ENCODE measurements at regions of chr12 and their contacts with region 1.

Region 1: DNA sequence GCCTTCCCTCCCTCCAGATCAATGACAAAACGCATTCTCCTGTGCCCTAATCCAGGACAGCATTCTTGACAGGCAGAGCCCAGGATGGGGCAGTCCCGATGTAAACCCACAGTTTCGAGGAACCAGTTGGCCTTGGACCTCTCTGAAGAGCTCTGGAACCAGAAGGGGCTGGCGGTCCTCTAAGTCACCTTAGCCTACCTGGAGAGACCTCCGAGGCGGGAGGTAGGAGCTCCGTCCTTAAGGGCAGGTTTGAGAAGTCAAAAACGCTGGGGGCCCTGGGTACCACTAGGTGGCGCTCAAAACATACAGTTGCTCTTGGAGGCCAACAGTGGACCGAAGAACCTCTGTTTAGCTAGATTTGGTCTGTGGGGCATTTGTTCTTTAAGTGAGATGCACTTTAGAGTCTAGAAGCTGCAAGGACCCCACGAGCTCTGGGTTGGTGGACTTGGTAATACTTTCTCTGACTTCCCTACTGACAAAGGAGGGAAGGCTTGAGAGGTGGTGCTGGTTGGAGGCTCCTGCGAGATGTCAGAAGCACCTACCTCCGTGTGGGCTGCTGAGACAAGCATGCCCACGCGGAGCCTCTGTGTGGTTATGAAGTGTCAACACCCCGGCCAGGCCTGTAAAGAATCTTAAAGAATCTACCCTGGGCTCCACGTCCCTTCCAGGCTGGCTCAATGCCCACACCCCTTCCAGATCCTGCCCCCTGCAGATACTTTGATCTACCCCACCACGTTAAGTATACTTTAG is 74.8 kb upstream of the CHST11 start:
- DNase-seq: peak; percentile 44
- ATAC-seq: peak; percentile 98
- H3K4me3 ChIP-seq: no peak overlapping the region
- H3K27ac ChIP-seq: no peak overlapping the region
- H3K4me1 ChIP-seq: no peaks in the 10 kb centered on the region
- H3K27me3 ChIP-seq: no peaks in the 10 kb centered on the region
- CTCF ChIP-seq: peak; percentile 91 to 92 (median 91); a peak in 5 of 6 replicates
- EP300 ChIP-seq: no peak
- POLR2A ChIP-seq: no peak
- RAD21 ChIP-seq: peak; percentile 100

Region 2: GRCh38 chr12:104201238-104202001 is 180.5 kb before region 1 on chr12:
- CTCF ChIA-PET with region 1: interaction called, 12 read pairs
- POLR2A ChIA-PET with region 1: no interaction called
- RAD21 ChIA-PET with region 1: no interaction called
- SMC1A ChIA-PET with region 1: interaction called, 4 read pairs
- in situ Hi-C with region 1: no loop called
- intact Hi-C with region 1: no loop called
- DNase-seq: peak; percentile 35
- ATAC-seq: peak; percentile 90
- H3K4me3 ChIP-seq: no peak overlapping the region
- H3K27ac ChIP-seq: no peak overlapping the region
- H3K4me1 ChIP-seq: no peaks in the 10 kb centered on the region
- H3K27me3 ChIP-seq: no peaks in the 10 kb centered on the region
- CTCF ChIP-seq: peak; percentile 80 to 83 (median 83)
- EP300 ChIP-seq: no peak
- POLR2A ChIP-seq: no peak
- RAD21 ChIP-seq: peak; percentile 95

Region 3: DNA sequence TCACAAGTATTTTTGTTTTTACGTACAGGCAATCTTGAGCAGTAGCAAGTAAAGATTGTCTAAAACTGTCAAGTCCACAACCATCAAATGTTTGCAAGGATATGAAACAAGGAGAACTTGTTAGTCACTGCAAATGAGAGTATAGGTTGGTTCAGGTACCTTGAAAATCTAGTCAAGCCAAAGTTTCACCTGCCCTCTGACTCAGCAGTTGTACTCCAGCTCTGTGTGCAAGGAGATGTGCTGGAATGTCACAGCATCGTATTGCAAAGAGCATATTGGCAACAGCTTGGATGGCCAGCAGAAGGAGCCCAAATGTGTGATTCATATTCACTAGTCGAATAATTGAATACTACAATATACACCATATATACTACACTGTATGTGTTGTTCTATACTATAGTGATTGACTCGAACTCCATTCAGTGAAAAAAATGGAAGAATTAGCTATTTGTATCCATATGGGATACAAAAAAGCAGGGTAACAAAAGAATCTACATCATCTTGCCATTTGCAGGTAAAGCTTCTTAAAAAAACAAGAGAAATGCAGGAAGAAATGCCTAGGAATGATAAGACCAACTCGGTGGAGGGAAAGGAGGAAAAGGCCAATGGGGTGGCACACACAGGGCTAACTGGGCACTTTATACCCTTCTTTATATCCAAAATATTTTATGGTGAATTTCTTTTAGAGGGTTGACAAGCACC is 34.4 kb before region 1 on chr12:
- CTCF ChIA-PET with region 1: no interaction called
- POLR2A ChIA-PET with region 1: no interaction called
- RAD21 ChIA-PET with region 1: no interaction called
- SMC1A ChIA-PET with region 1: no interaction called
- in situ Hi-C with region 1: no loop called
- intact Hi-C with region 1: no loop called
- DNase-seq: no peak
- ATAC-seq: no peak
- H3K4me3 ChIP-seq: no peak overlapping the region
- H3K27ac ChIP-seq: no peak overlapping the region
- H3K4me1 ChIP-seq: peaks cover 9% of the 10 kb centered on the region
- H3K27me3 ChIP-seq: no peaks in the 10 kb centered on the region
- CTCF ChIP-seq: no peak
- EP300 ChIP-seq: no peak
- POLR2A ChIP-seq: no peak
- RAD21 ChIP-seq: no peak

Region 4: GRCh38 chr12:104485651-104486362 is 103.9 kb after region 1 on chr12:
- CTCF ChIA-PET with region 1: interaction called, 14 read pairs
- POLR2A ChIA-PET with region 1: no interaction called
- RAD21 ChIA-PET with region 1: interaction called, 4 read pairs
- SMC1A ChIA-PET with region 1: interaction called, 4 read pairs
- in situ Hi-C with region 1: no loop called
- intact Hi-C with region 1: no loop called
- DNase-seq: no peak
- ATAC-seq: peak; percentile 65
- H3K4me3 ChIP-seq: no peak overlapping the region
- H3K27ac ChIP-seq: peak overlapping the region; percentile 52
- H3K4me1 ChIP-seq: peaks cover 35% of the 10 kb centered on the region
- H3K27me3 ChIP-seq: no peaks in the 10 kb centered on the region
- CTCF ChIP-seq: no peak
- EP300 ChIP-seq: no peak
- POLR2A ChIP-seq: no peak
- RAD21 ChIP-seq: no peak

Region 5: DNA sequence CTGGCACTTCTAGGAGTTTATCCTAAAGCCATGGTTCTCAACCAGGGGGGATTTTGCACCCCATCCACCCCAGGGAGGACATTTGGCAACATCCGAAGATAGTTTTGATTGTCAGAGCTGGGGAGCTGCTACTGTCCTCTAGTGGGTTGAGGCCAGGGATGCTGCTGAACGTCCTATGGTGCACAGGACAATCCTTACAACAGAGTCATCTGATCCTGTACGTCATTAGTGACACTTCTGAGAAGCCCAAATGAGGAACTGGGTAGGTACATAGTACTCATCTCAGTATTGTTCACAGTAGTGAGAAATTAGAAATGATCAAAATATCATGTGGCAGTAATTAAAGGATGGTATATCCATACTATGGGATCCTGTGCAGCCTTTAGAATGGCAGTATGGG is 260.0 kb after region 1 on chr12:
- CTCF ChIA-PET with region 1: interaction called, 11 read pairs
- POLR2A ChIA-PET with region 1: no interaction called
- RAD21 ChIA-PET with region 1: interaction called, 7 read pairs
- SMC1A ChIA-PET with region 1: interaction called, 8 read pairs
- in situ Hi-C with region 1: no loop called
- intact Hi-C with region 1: loop called (anchors 5 kb)
- DNase-seq: peak; percentile 79
- ATAC-seq: peak; percentile 92
- H3K4me3 ChIP-seq: no peak overlapping the region
- H3K27ac ChIP-seq: peak overlapping the region; percentile 78
- H3K4me1 ChIP-seq: peaks cover 43% of the 10 kb centered on the region
- H3K27me3 ChIP-seq: no peaks in the 10 kb centered on the region
- CTCF ChIP-seq: peak; percentile 37 to 65 (median 50); a peak in 5 of 6 replicates
- EP300 ChIP-seq: peak; percentile 99
- POLR2A ChIP-seq: no peak
- RAD21 ChIP-seq: peak; percentile 65

Region 6: GRCh38 chr12:104733717-104734175 is 351.8 kb after region 1 on chr12:
- CTCF ChIA-PET with region 1: interaction called, 10 read pairs
- POLR2A ChIA-PET with region 1: no interaction called
- RAD21 ChIA-PET with region 1: no interaction called
- SMC1A ChIA-PET with region 1: interaction called, 5 read pairs
- in situ Hi-C with region 1: no loop called
- intact Hi-C with region 1: no loop called
- DNase-seq: no peak
- ATAC-seq: peak; percentile 75
- H3K4me3 ChIP-seq: no peak overlapping the region
- H3K27ac ChIP-seq: no peak overlapping the region
- H3K4me1 ChIP-seq: peaks cover 18% of the 10 kb centered on the region
- H3K27me3 ChIP-seq: no peaks in the 10 kb centered on the region
- CTCF ChIP-seq: peak in 2 of 3 experiments; percentile 26 to 39; a peak in 3 of 6 replicates
- EP300 ChIP-seq: no peak
- POLR2A ChIP-seq: no peak
- RAD21 ChIP-seq: peak; percentile 55

Region 7: DNA sequence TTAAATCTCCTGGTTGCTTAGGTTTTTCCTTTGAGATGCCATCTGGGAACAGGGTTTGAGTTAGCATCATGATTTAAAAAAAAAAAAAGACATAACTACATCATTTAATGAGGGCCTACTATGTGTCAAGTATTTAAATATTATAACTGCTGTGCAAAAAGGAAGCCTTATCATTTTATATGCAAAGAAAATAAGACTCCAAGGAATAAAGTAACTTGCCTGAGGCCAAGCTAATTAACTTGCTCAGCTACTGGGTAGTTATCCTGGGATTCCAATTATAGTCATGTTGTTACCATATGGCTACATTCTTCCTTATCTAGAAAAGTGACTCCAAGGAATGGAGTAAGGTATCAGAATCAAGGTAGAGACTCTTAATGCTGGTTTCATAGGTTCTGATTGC is 452.7 kb after region 1 on chr12:
- CTCF ChIA-PET with region 1: interaction called, 7 read pairs
- POLR2A ChIA-PET with region 1: no interaction called
- RAD21 ChIA-PET with region 1: interaction called, 9 read pairs
- SMC1A ChIA-PET with region 1: interaction called, 6 read pairs
- in situ Hi-C with region 1: no loop called
- intact Hi-C with region 1: loop called (anchors 5 kb)
- DNase-seq: no peak
- ATAC-seq: no peak
- H3K4me3 ChIP-seq: no peak overlapping the region
- H3K27ac ChIP-seq: no peak overlapping the region
- H3K4me1 ChIP-seq: no peaks in the 10 kb centered on the region
- H3K27me3 ChIP-seq: no peaks in the 10 kb centered on the region
- CTCF ChIP-seq: no peak
- EP300 ChIP-seq: no peak
- POLR2A ChIP-seq: no peak
- RAD21 ChIP-seq: no peak

Region 8: GRCh38 chr12:105053116-105053572 is 671.2 kb after region 1 on chr12:
- CTCF ChIA-PET with region 1: interaction called, 142 read pairs
- POLR2A ChIA-PET with region 1: interaction called, 4 read pairs
- RAD21 ChIA-PET with region 1: interaction called, 73 read pairs
- SMC1A ChIA-PET with region 1: interaction called, 93 read pairs
- in situ Hi-C with region 1: loop called (anchors 5 kb)
- intact Hi-C with region 1: loop called (anchors 1 kb)
- DNase-seq: peak; percentile 79
- ATAC-seq: peak; percentile 96
- H3K4me3 ChIP-seq: no peak overlapping the region
- H3K27ac ChIP-seq: no peak overlapping the region
- H3K4me1 ChIP-seq: peaks cover 8% of the 10 kb centered on the region
- H3K27me3 ChIP-seq: no peaks in the 10 kb centered on the region
- CTCF ChIP-seq: peak; percentile 78 to 96 (median 94)
- EP300 ChIP-seq: no peak
- POLR2A ChIP-seq: no peak
- RAD21 ChIP-seq: peak; percentile 99